PC-9 (cell line): ENCODE measurements at regions of chr17 and their contacts with region 1.

Region 1: DNA sequence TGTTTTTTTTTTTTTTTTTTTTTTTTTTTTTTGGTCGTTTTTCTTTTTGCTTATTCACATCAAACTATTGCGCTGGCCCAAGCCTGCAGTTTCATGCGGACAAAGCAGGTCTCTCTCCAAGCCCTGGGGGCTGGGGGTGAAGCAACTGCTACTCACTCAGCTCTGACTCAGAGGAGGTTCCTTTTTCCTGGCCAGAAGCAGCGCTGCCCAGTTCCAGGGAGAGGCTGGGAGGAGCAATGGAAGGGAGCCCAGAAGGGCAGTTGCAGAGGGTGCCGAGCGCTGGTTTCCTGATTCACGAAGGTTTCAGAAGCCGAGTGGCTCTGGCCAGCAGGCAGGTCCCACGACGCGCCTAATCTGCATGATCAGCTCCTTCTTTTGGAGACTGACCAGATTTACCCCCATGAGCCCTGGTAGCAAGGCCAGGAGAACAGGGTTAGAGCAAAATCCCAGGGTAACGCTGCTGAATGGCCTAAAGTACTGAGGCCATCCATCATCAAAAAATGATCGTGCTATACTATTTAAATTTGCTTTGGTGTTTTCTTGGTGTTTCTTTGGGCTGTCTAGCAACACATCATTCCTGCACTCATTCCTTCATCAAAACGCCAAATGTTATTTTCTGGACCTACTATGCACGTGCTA is 144.7 kb upstream of the SOX9 start:
- DNase-seq: peak; percentile 89 to 93
- H3K4me3 ChIP-seq: peak overlapping the region; percentile 32; the same call in 1 of the 2 replicates
- H3K27ac ChIP-seq: peak overlapping the region; percentile 79
- H3K4me1 ChIP-seq: peaks cover 17% of the 10 kb centered on the region
- H3K27me3 ChIP-seq: no peaks in the 10 kb centered on the region
- CTCF ChIP-seq: no peak

Region 2: DNA sequence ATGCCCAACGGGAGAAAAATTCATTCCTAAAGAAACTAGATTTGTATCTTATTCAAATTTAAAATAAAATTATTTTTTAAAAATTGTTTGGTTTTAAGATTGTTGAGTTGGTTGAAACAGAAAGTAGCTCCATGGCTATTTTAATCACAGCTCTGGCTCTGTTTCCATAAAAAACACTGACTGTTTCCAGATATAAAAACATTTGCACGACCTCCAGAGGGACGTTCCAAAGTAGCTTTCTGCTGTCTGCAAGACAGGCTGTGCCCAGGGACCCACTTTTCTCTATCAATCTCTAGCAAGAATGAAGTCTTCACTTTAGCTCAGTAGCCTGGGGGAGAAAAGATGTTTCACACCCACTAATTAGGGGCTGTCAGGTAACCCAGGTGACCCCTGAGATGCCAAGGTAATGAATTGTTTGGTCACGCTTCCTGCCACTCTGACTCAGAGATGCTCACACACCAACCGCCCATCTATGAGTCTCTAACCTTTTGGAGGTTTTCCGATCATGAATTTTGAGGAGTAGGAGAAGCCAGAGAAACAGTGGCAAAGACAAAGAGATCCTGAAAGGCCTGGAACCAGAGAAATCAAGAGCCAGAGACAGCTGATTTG is 75.4 kb before region 1 on chr17:
- CTCF ChIA-PET with region 1: no interaction called
- POLR2A ChIA-PET with region 1: no interaction called
- intact Hi-C with region 1: loop called (anchors 1 kb)
- DNase-seq: peak; percentile 65 to 93
- H3K4me3 ChIP-seq: peak overlapping the region; percentile 35; the same call in 1 of the 2 replicates
- H3K27ac ChIP-seq: peak overlapping the region; percentile 91
- H3K4me1 ChIP-seq: peaks cover 46% of the 10 kb centered on the region
- H3K27me3 ChIP-seq: no peaks in the 10 kb centered on the region
- CTCF ChIP-seq: no peak

Region 3: GRCh38 chr17:71987634-71988033 is 11.5 kb after region 1 on chr17:
- CTCF ChIA-PET with region 1: no interaction called
- POLR2A ChIA-PET with region 1: no interaction called
- intact Hi-C with region 1: no loop called
- DNase-seq: peak in 1 of 2 experiments; percentile 38
- H3K4me3 ChIP-seq: no peak overlapping the region
- H3K27ac ChIP-seq: no peak overlapping the region
- H3K4me1 ChIP-seq: peaks cover 30% of the 10 kb centered on the region
- H3K27me3 ChIP-seq: no peaks in the 10 kb centered on the region
- CTCF ChIP-seq: no peak

Region 4: GRCh38 chr17:72097144-72097543 is 121.0 kb after region 1 on chr17:
- CTCF ChIA-PET with region 1: no interaction called
- POLR2A ChIA-PET with region 1: interaction called, 39 read pairs
- intact Hi-C with region 1: no loop called
- DNase-seq: peak; percentile 46 to 87
- H3K4me3 ChIP-seq: peak overlapping the region; percentile 17; the same call in 1 of the 2 replicates
- H3K27ac ChIP-seq: peak overlapping the region; percentile 27
- H3K4me1 ChIP-seq: peaks cover 15% of the 10 kb centered on the region
- H3K27me3 ChIP-seq: no peaks in the 10 kb centered on the region
- CTCF ChIP-seq: no peak